HCT116 (cell line): ENCODE measurements at regions of chr5 and their contacts with region 1.

Region 1: DNA sequence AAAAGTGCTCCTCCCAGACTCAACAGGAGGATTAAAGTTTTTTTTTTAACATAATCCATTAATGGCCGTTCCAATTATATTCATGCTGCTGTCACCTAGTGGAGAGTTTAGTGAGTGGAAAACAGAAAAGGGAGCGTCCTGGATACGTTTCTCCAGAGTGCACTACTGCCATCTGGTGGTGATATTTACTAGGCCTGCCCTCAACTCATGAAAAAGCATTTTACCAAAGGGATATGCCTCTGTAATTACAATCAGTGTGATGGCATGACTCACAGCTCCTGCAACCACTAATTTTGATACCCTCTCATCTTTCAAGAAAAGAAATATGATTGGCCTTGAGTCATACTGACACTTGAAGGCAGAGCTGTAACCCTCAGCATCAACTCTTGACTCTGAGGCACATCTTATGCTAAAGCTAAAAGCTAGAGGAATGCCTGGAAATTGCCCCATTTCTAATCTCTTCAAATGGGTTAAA is 20.0 kb downstream of the MINAR2 start:
- DNase-seq: peak; percentile 92
- ATAC-seq: peak; percentile 91
- H3K4me3 ChIP-seq: no peak overlapping the region
- H3K27ac ChIP-seq: no peak overlapping the region
- H3K4me1 ChIP-seq: no peaks in the 10 kb centered on the region; a peak in 1 of 4 replicates
- H3K27me3 ChIP-seq: no peaks in the 10 kb centered on the region
- CTCF ChIP-seq: peak; percentile 96 to 99 (median 99)
- POLR2A ChIP-seq: no peak
- RAD21 ChIP-seq: peak; percentile 99

Region 2: GRCh38 chr5:128905571-128906110 is 862.3 kb before region 1 on chr5:
- CTCF ChIA-PET with region 1: interaction called, 7 read pairs
- POLR2A ChIA-PET with region 1: no interaction called
- RAD21 ChIA-PET with region 1: interaction called in 1 of 2 experiments, 3 read pairs
- intact Hi-C with region 1: loop called (anchors 2 kb)
- DNase-seq: peak; percentile 61
- ATAC-seq: peak; percentile 97
- H3K4me3 ChIP-seq: no peak overlapping the region
- H3K27ac ChIP-seq: no peak overlapping the region
- H3K4me1 ChIP-seq: no peaks in the 10 kb centered on the region; a peak in 1 of 4 replicates
- H3K27me3 ChIP-seq: no peaks in the 10 kb centered on the region
- CTCF ChIP-seq: peak; percentile 62 to 81 (median 76)
- POLR2A ChIP-seq: no peak
- RAD21 ChIP-seq: peak; percentile 88

Region 3: DNA sequence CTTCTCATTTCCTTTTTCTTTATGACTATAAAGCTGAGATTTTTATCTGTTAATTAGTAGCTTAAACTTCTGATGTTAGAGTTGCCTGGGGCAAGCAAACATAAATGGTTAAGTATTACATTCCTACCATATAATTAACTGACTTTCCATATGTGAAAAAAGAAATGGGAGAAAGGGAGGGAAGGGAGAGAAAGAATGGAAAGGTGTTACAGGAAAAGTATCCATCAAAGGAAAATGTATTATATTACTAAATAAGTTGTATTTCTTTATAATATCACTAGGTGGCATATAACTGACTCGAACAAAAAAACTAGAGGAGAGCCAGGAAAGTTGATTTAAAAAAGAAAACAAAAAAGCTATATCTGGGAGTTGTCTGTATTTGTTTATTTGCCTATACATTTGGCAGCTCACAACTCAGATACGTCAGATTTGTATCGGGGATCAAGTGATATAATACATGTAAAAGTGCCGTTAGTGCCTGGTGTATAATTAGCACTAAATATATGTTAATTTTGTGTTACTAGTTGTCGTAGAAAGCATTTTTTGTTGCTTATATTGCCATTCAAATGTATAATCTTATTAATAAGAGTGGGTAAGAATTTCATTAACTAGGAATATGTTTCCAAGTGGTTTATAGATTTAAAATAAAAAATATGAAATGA is 367.5 kb before region 1 on chr5:
- CTCF ChIA-PET with region 1: interaction called, 14 read pairs
- POLR2A ChIA-PET with region 1: no interaction called
- RAD21 ChIA-PET with region 1: no interaction called
- intact Hi-C with region 1: loop called (anchors 5 kb)
- DNase-seq: no peak
- ATAC-seq: no peak
- H3K4me3 ChIP-seq: no peak overlapping the region
- H3K27ac ChIP-seq: no peak overlapping the region
- H3K4me1 ChIP-seq: no peaks in the 10 kb centered on the region
- H3K27me3 ChIP-seq: no peaks in the 10 kb centered on the region
- CTCF ChIP-seq: peak in 2 of 3 experiments; percentile 9 to 33; a peak in 2 of 6 replicates
- POLR2A ChIP-seq: no peak
- RAD21 ChIP-seq: peak; percentile 31; the same call in 1 of the 2 replicates

Region 4: DNA sequence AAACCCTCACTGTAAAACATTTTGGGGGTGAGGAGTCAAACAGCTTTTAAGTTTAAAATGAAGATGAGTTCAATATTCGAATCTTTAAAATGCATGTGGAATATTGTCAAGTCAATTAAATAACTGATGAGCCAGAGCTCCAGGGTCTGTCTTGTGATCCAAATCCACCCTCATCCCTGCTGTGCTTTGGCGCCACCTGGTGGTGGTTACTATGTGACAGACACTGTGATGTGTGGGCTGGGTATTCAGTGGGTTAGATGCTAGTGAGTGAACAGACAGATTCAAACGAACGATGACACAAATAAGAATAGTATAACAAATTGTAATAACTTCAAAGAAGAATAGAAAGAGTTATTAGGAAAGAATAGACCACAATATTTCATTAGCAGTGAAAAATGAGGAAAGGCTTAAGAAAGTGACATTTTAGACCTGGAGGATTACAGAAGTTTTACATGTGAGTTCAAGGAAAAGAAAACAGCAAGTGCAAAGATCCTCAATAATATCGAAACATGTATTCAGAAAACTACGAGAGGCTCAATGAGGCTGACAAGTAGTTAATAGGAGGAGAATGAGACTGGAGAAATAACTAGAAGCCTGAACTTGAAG is 84.9 kb after region 1 on chr5:
- CTCF ChIA-PET with region 1: interaction called, 208 read pairs
- POLR2A ChIA-PET with region 1: no interaction called
- RAD21 ChIA-PET with region 1: interaction called, 22 to 29 read pairs
- intact Hi-C with region 1: loop called (anchors 1 kb)
- DNase-seq: peak; percentile 62
- ATAC-seq: peak; percentile 100
- H3K4me3 ChIP-seq: no peak overlapping the region
- H3K27ac ChIP-seq: no peak overlapping the region
- H3K4me1 ChIP-seq: peaks cover 0 to 5% of the 10 kb centered on the region in 2 experiments; a peak in 1 of 4 replicates
- H3K27me3 ChIP-seq: no peaks in the 10 kb centered on the region
- CTCF ChIP-seq: peak; percentile 85 to 97 (median 90)
- POLR2A ChIP-seq: no peak
- RAD21 ChIP-seq: peak; percentile 89

Region 5: GRCh38 chr5:130912088-130912487 is 1144.1 kb after region 1 on chr5:
- CTCF ChIA-PET with region 1: interaction called, 6 read pairs
- POLR2A ChIA-PET with region 1: no interaction called
- RAD21 ChIA-PET with region 1: no interaction called
- intact Hi-C with region 1: loop called (anchors 1 kb)
- DNase-seq: peak; percentile 19
- ATAC-seq: peak; percentile 71
- H3K4me3 ChIP-seq: no peak overlapping the region
- H3K27ac ChIP-seq: no peak overlapping the region
- H3K4me1 ChIP-seq: no peaks in the 10 kb centered on the region
- H3K27me3 ChIP-seq: no peaks in the 10 kb centered on the region
- CTCF ChIP-seq: peak; percentile 54 to 72 (median 63); a peak in 5 of 6 replicates
- POLR2A ChIP-seq: no peak
- RAD21 ChIP-seq: peak; percentile 85